Activated naive CD4-positive, alpha-beta T cell treated with anti-CD3 and anti-CD28 coated beads for 36 hours (primary cell): ENCODE measurements at regions of chr10 and their contacts with region 1.

Region 1: GRCh38 chr10:86936661-86937501 is 20.5 kb downstream of the MMRN2 start:
- DNase-seq: no peak
- H3K4me3 Mint-ChIP-seq: no peak overlapping the region
- H3K27ac Mint-ChIP-seq: no peak overlapping the region
- H3K4me1 Mint-ChIP-seq: no peaks in the 10 kb centered on the region
- H3K27me3 Mint-ChIP-seq: no peaks in the 10 kb centered on the region

Region 2: GRCh38 chr10:86349474-86349873 is 587.4 kb before region 1 on chr10:
- CTCF ChIA-PET with region 1: no interaction called
- intact Hi-C with region 1: no loop called
- DNase-seq: no peak
- H3K4me3 Mint-ChIP-seq: no peak overlapping the region
- H3K27ac Mint-ChIP-seq: no peak overlapping the region
- H3K4me1 Mint-ChIP-seq: no peaks in the 10 kb centered on the region
- H3K27me3 Mint-ChIP-seq: peaks cover 3% of the 10 kb centered on the region

Region 3: DNA sequence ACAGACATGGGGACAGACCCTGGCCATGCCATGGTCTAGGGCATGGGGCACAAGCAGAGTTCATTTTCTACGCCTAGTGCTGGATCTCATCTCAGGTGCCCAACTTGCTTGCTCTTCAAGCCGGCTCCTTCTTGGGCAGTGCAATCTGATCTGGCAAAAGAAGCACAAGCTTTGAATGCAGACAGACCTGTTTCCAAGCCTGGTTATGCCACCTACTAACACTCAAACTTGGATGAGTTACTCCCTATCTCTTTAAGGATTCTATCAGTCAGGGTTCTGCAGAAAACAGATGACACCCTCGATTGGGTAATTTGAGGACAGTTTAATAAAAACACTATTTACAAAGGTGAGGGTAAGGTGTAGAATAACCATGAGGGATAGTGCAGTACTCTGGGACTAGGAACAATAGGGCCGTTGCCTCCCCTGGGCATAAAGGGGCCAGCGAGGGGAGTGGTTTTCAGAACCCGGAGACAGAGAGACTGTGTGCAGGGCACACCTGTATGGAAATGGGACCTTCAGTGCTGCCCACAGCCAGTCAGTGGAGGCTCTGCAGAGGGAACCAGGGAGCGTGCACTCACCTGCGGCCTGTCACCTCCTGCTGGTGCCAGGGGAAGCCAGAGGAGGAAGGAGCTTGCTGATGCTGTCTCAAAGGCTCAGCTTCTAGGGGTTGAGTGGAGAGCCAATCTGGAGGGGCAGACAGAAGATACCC is 380.2 kb before region 1 on chr10:
- CTCF ChIA-PET with region 1: no interaction called
- intact Hi-C with region 1: no loop called
- DNase-seq: no peak
- H3K4me3 Mint-ChIP-seq: no peak overlapping the region
- H3K27ac Mint-ChIP-seq: no peak overlapping the region
- H3K4me1 Mint-ChIP-seq: peaks cover 3% of the 10 kb centered on the region
- H3K27me3 Mint-ChIP-seq: no peaks in the 10 kb centered on the region

Region 4: GRCh38 chr10:86688398-86688921 is 248.4 kb before region 1 on chr10:
- CTCF ChIA-PET with region 1: interaction called, 4 read pairs
- intact Hi-C with region 1: loop called (anchors 1 kb)
- DNase-seq: peak; percentile 66
- H3K4me3 Mint-ChIP-seq: no peak overlapping the region
- H3K27ac Mint-ChIP-seq: no peak overlapping the region
- H3K4me1 Mint-ChIP-seq: no peaks in the 10 kb centered on the region
- H3K27me3 Mint-ChIP-seq: no peaks in the 10 kb centered on the region

Region 5: GRCh38 chr10:86922553-86922961 is 14.3 kb before region 1 on chr10:
- CTCF ChIA-PET with region 1: no interaction called
- intact Hi-C with region 1: no loop called
- DNase-seq: no peak
- H3K4me3 Mint-ChIP-seq: no peak overlapping the region
- H3K27ac Mint-ChIP-seq: no peak overlapping the region
- H3K4me1 Mint-ChIP-seq: no peaks in the 10 kb centered on the region
- H3K27me3 Mint-ChIP-seq: no peaks in the 10 kb centered on the region

Region 6: DNA sequence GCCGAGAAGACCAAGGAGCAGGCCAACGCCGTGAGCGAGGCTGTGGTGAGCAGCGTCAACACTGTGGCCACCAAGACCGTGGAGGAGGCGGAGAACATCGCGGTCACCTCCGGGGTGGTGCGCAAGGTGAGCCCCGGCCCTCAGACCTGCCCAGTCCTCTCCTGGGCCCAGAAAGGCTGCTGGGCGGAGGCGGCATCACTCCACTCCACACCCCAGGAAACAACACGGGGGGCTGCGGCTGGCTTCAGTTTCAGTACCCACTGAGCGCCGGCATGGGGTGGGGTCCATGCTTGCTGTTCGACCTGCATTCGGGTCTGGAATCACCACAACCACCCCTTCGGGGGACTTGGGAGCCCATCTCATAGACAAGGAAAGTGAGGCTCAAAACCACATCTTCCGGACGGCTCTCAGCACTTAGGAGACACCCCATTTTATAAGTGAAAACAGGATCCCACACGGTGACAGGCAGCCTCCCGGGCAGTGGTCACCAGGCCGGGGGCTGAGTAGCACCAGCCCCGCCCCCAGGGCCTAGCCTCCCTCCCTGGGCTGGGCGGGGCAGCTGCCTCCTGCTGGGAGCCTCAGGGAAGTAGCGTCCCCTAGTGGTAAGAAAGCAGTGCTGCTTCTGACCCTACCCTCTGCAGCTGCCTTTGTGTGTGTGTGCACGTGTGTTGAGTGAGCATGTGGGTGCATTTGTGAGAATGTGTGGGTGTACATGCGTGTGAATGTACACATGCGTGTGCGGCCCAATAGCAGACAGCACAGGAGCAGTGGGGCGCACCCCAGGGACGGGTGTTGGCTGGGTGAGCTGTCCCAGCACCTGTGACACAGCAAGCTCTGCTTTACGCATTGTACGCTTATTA is 23.4 kb after region 1 on chr10:
- CTCF ChIA-PET with region 1: interaction called, 22 read pairs
- intact Hi-C with region 1: loop called (anchors 1 kb)
- DNase-seq: peak; percentile 46
- H3K4me3 Mint-ChIP-seq: no peak overlapping the region
- H3K27ac Mint-ChIP-seq: no peak overlapping the region
- H3K4me1 Mint-ChIP-seq: peaks cover 5% of the 10 kb centered on the region
- H3K27me3 Mint-ChIP-seq: no peaks in the 10 kb centered on the region

Region 7: DNA sequence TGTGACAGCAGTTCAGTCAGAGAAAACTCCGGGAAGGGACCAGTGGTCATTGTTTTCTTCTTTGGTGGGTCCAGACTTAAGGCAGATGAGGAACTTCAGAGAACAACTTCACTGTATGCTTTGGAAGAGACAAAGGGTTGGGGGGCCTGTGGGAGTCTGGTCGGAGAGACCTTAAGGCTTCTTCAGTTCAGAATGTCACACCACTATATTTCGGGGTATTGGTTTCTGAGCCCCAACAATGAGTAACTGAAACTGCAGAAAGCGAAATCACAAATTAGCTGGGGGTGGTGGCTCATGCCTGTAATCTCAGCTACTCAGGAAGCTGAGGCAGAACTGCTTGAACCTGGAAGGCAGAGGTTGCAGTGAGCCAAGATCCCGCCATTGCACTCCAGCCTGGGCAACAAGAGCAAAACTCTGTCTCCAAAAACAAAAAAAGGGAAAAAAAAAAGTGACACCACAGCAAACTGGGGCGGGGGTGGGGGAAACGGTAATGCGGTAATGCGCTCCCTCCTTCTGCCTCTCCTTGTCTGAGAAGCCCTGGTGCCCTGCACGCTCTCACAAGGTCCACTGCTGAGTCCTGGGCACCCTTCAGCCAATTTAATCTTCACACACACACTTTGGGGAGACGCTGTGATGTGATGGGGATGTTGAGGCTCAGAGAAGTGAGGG is 29.2 kb after region 1 on chr10:
- CTCF ChIA-PET with region 1: interaction called, 22 read pairs
- intact Hi-C with region 1: loop called (anchors 1 kb)
- DNase-seq: peak; percentile 51
- H3K4me3 Mint-ChIP-seq: peak overlapping the region; percentile 54
- H3K27ac Mint-ChIP-seq: peak overlapping the region; percentile 77
- H3K4me1 Mint-ChIP-seq: peaks cover 39% of the 10 kb centered on the region
- H3K27me3 Mint-ChIP-seq: no peaks in the 10 kb centered on the region

Region 8: GRCh38 chr10:87101996-87102395 is 165.1 kb after region 1 on chr10:
- CTCF ChIA-PET with region 1: no interaction called
- intact Hi-C with region 1: no loop called
- DNase-seq: no peak
- H3K4me3 Mint-ChIP-seq: no peak overlapping the region
- H3K27ac Mint-ChIP-seq: no peak overlapping the region
- H3K4me1 Mint-ChIP-seq: peaks cover 12% of the 10 kb centered on the region
- H3K27me3 Mint-ChIP-seq: no peaks in the 10 kb centered on the region